Right cardiac atrium (tissue), 5 donors: ENCODE measurements at regions of chr5 and their contacts with region 1.

Region 1: DNA sequence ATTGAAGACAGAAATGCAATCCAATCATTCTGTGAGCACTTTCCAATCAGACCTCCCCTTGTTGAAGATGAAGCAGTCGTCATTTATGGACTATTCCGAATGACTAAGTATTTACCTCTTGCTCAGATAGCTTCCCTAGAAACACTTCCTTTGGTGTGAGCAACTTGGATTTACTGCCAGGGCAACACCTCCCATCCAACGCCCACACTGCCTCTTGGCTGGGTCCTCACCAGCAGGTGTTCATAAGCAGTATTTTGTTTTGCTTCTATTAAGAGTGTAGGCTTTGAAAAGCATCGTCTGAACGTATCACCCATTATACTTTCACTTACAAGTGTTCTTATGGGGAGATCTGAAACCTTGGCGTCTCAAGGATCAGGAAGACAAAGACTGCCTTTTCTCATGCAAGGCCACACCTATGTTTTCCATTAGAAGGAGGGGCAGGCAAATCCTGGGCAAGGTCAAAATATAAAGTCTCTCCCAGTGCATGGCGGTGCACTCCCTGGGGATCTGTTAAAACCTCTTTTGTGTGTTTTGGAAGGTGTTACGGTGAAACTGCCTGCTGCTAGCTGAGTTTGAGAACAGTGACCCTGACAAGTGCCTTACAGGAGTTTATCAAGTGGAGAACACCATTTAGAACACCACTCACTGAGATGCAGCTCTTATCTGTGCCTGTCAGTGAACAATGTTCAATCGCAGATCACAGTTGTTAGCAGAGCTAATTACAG is 10.6 kb upstream of the MARCHF3 start:
- DNase-seq: peak in 1 of 3 donors; percentile 19
- ATAC-seq: peak; percentile 69 to 90
- H3K4me3 ChIP-seq: no peak overlapping the region
- H3K27ac ChIP-seq: peak overlapping the region; percentile 67
- H3K4me1 ChIP-seq: peaks cover 7% of the 10 kb centered on the region
- H3K27me3 ChIP-seq: no peaks in the 10 kb centered on the region

Region 2: DNA sequence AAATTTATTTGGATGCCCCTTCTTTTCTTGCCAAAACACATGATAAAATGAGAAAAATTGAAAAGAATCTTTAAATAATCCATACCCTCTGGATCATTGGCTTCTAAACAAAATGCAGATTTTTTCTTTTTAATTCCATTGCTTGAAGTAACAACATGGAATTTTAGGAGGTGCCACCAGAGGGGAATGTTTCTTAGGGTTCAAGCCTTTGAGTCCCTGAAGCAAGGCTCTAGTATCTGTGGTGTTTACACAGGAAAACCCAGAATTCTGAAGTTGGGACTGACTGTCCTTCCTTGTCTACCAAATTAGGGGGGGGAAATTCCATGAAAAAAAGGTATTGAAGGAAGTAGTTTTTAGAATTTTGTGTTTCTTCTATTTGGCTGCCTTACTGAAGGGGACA is 194.6 kb before region 1 on chr5:
- intact Hi-C with region 1: loop called in 3 of 4 experiments (anchors 5 to 10 kb)
- DNase-seq: no peak
- ATAC-seq: no peak
- H3K4me3 ChIP-seq: no peak overlapping the region
- H3K27ac ChIP-seq: no peak overlapping the region
- H3K4me1 ChIP-seq: peaks cover 3% of the 10 kb centered on the region
- H3K27me3 ChIP-seq: no peaks in the 10 kb centered on the region

Region 3: GRCh38 chr5:126888175-126888574 is 152.8 kb before region 1 on chr5:
- intact Hi-C with region 1: no loop called
- DNase-seq: no peak
- ATAC-seq: no peak
- H3K4me3 ChIP-seq: no peak overlapping the region
- H3K27ac ChIP-seq: no peak overlapping the region
- H3K4me1 ChIP-seq: peaks cover 3% of the 10 kb centered on the region
- H3K27me3 ChIP-seq: no peaks in the 10 kb centered on the region

Region 4: DNA sequence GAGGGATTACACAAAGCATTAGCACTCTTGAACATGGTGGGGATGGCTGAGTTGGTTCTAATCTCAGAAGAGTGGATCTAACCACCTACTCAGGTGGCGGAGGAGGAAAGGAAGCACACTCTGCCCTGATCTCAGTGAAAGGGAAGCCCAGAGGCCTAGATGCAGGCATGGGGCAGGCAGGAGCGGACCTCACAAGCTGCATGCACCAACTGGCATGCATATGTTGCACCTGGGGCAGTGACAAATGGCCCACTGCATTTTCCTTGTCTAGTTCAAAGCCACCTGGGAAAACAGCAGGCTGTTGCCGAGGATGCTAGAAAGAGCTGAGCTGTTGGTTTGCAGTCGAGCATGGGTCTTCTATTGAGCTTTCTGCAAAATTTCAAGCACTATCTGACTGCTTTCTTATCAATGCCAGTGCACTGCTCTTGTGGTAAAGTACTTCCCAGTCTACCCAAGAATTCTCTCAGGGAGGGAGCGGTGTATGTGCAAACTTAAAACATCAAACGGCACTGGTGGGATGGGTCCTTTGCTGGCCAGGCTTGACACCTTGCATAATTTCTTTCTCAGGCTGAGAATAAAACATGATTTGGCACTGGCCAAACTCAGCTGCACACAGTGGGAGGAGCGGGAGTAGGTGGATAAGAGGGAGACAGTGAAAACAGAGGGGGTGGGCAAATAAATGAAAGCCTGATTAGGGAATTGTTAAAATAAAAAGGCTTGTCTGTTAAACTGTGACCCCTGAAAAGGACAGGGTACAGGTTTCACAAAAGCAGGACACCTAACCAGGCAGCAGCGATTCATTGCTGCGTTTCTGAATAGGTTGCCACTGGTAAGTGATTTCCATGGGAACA is 119.5 kb before region 1 on chr5:
- intact Hi-C with region 1: no loop called
- DNase-seq: peak in 1 of 3 donors; percentile 51
- ATAC-seq: no peak
- H3K4me3 ChIP-seq: no peak overlapping the region
- H3K27ac ChIP-seq: peak overlapping the region; percentile 48
- H3K4me1 ChIP-seq: peaks cover 13% of the 10 kb centered on the region
- H3K27me3 ChIP-seq: no peaks in the 10 kb centered on the region

Region 5: DNA sequence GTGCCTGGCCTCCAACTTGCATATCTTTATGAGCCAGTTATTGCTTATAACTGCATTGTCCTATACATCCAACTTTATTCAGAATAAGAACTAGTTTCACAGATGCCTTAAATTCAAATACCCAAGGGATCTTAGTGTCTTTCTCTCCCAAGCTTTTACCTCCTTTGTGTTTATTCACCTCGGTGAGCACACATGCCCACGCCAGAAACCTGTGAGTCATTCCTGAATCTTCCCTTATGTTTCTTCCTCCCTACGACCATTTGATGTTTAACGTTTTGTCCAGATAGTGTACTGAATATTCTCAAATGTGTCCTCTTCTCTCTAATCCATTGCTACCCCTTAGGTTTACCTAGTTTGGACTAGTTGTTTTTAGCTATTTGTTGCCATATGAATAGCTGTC is 194.2 kb after region 1 on chr5:
- intact Hi-C with region 1: no loop called
- DNase-seq: no peak
- ATAC-seq: no peak
- H3K4me3 ChIP-seq: no peak overlapping the region
- H3K27ac ChIP-seq: no peak overlapping the region
- H3K4me1 ChIP-seq: no peaks in the 10 kb centered on the region
- H3K27me3 ChIP-seq: no peaks in the 10 kb centered on the region

Region 6: GRCh38 chr5:127290019-127290945 is 249.3 kb after region 1 on chr5 and contains the start of gene MEGF10:
- intact Hi-C with region 1: no loop called
- DNase-seq: peak; percentile 29 to 79 (median 73)
- ATAC-seq: peak; percentile 79 to 87
- H3K4me3 ChIP-seq: peak within 1 kb of the TSS; percentile 2
- H3K27ac ChIP-seq: no peak within 1 kb of the TSS
- H3K4me1 ChIP-seq: no peaks in the 10 kb centered on the region
- H3K27me3 ChIP-seq: no peaks in the 10 kb centered on the region
- total RNA-seq, gene MEGF10: 0.47 to 2.7 (median 1.4) TPM